ENCODE measurements at regions of chr1 and their contacts with region 1.

Region 1: DNA sequence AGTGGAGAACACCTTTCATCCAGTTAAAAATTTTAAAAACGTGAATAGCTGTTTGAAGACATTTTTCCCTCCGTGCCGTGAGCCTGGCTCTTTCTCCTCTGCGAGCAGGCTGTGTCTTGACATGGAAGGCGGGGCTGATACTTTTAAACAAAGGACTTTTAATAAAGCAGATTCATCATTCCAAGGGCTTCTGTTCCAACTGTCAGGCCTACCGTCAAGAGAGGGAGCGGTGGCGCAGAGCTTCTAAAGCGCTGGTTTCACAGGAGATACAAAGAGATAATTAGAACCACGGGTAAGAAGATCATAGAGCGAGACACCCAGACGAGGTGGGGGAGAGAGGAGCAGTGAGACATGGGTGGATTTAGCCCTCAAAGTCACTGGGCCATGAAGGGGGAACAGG is 247.4 kb upstream of the C1orf174 start:
- DNase-seq: no peak
- H3K4me3 ChIP-seq: no peak overlapping the region
- H3K27ac ChIP-seq: no peak overlapping the region
- H3K4me1 ChIP-seq: no peaks in the 10 kb centered on the region
- H3K27me3 ChIP-seq: no peaks in the 10 kb centered on the region
- CTCF ChIP-seq: no peak

Region 2: DNA sequence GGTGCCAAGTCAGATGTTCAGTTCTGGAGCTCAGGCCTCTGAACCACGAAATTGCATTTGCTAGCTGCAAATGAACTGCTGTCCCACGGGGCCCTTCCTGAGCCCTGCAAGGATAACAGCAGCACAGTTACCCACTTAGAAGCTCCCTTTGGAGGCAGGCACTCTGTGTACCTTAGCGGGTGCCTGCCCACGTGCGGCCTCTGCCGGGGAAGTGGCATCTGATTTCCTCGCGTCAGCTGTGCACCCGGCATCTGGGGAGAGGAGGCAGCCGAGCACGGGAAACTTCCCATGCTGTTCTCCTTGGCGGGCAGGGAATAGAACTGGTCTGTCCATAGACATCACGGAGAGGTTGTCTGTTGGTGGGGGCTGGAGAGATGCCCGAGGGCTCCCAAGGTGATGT is 99.4 kb before region 1 on chr1:
- dilution Hi-C with region 1: no loop called
- DNase-seq: no peak
- H3K4me3 ChIP-seq: no peak overlapping the region
- H3K27ac ChIP-seq: no peak overlapping the region
- H3K4me1 ChIP-seq: no peaks in the 10 kb centered on the region
- H3K27me3 ChIP-seq: no peaks in the 10 kb centered on the region
- CTCF ChIP-seq: no peak

Region 3: GRCh38 chr1:4083231-4084047 is 64.1 kb before region 1 on chr1:
- dilution Hi-C with region 1: loop called (anchors 5 kb)
- DNase-seq: no peak
- H3K4me3 ChIP-seq: no peak overlapping the region
- H3K27ac ChIP-seq: no peak overlapping the region
- H3K4me1 ChIP-seq: no peaks in the 10 kb centered on the region
- H3K27me3 ChIP-seq: no peaks in the 10 kb centered on the region
- CTCF ChIP-seq: no peak

Region 4: DNA sequence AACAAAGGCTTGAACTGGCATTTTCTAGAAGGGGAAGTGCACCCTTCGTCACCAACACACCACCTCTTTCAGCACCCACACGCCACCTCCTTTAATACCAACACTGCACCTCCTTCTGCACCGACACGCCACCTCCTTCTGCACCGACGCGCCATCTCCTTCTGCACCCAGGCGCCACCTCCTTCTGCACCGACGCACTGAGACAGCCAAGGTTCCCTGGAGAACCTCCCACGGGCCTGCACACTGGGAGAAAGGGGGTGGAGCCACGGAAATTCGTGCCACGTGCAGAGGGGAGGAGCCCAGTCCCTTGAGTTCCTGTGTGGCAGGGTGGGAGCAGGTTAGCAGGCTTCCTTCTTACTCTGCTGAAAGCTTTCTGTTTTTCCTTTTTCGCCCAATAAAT is 80.5 kb after region 1 on chr1:
- dilution Hi-C with region 1: no loop called
- DNase-seq: no peak
- H3K4me3 ChIP-seq: no peak overlapping the region
- H3K27ac ChIP-seq: no peak overlapping the region
- H3K4me1 ChIP-seq: no peaks in the 10 kb centered on the region
- H3K27me3 ChIP-seq: no peaks in the 10 kb centered on the region
- CTCF ChIP-seq: no peak

Measured in keratinocyte (primary cell).